Endothelial cell of umbilical vein (primary cell): ENCODE measurements at regions of chr7 and their contacts with region 1.

Region 1: GRCh38 chr7:123635551-123636359 is 19.9 kb upstream of the LMOD2 start:
- DNase-seq: peak; percentile 64
- H3K4me3 ChIP-seq: no peak overlapping the region
- H3K27ac ChIP-seq: peak overlapping the region; percentile 18
- H3K4me1 ChIP-seq: peaks cover 28% of the 10 kb centered on the region
- H3K27me3 ChIP-seq: no peaks in the 10 kb centered on the region
- CTCF ChIP-seq: peak; percentile 44 to 52
- POLR2A ChIP-seq: no peak

Region 2: DNA sequence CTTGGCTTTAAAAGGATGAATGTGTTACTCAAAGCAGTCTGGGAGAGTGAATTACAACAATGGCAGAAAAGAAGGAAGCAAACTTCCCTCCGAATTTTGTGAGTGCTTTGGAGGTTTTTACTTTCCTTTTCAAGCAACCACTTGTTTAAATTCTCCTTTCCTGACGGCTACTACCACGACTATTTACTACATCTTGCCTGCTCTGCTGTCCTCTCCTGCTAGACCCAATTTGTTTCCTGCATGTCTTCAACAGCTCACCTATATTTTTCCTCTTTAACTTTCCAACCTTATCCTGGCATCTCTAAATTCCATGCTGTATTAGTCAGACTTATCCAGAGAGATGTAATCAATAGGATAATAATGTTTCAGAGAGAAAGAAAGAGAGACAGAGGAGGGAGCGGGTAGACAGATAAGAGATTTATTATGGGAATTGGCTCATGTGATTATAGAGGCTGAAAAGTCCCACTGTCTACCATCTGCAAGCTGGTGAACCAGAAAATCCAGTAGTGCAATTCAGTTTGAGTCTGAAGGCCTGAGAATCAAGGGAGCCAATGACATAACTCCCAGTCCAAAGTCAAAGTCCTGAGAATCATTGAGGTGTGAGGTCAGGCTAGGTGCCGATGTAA is 393.2 kb before region 1 on chr7:
- CTCF ChIA-PET with region 1: no interaction called
- POLR2A ChIA-PET with region 1: no interaction called
- dilution Hi-C with region 1: no loop called
- intact Hi-C with region 1: no loop called
- DNase-seq: no peak
- H3K4me3 ChIP-seq: no peak overlapping the region
- H3K27ac ChIP-seq: no peak overlapping the region
- H3K4me1 ChIP-seq: no peaks in the 10 kb centered on the region
- H3K27me3 ChIP-seq: no peaks in the 10 kb centered on the region
- CTCF ChIP-seq: no peak
- POLR2A ChIP-seq: no peak

Region 3: GRCh38 chr7:123494193-123494796 is 141.5 kb before region 1 on chr7:
- CTCF ChIA-PET with region 1: interaction called, 17 read pairs
- POLR2A ChIA-PET with region 1: interaction called, 3 read pairs
- dilution Hi-C with region 1: no loop called
- intact Hi-C with region 1: loop called (anchors 1 kb)
- DNase-seq: peak; percentile 62
- H3K4me3 ChIP-seq: no peak overlapping the region
- H3K27ac ChIP-seq: no peak overlapping the region
- H3K4me1 ChIP-seq: no peaks in the 10 kb centered on the region
- H3K27me3 ChIP-seq: peaks cover 3 to 10% of the 10 kb centered on the region in 2 experiments
- CTCF ChIP-seq: peak; percentile 25 to 37
- POLR2A ChIP-seq: no peak

Region 4: GRCh38 chr7:123580406-123581161 is 55.2 kb before region 1 on chr7:
- CTCF ChIA-PET with region 1: interaction called, 26 read pairs
- POLR2A ChIA-PET with region 1: no interaction called
- dilution Hi-C with region 1: no loop called
- intact Hi-C with region 1: loop called (anchors 1 kb)
- DNase-seq: peak; percentile 61
- H3K4me3 ChIP-seq: no peak overlapping the region
- H3K27ac ChIP-seq: no peak overlapping the region
- H3K4me1 ChIP-seq: no peaks in the 10 kb centered on the region
- H3K27me3 ChIP-seq: no peaks in the 10 kb centered on the region
- CTCF ChIP-seq: peak; percentile 69 to 73
- POLR2A ChIP-seq: no peak

Region 5: GRCh38 chr7:123748734-123749536 is 113.2 kb after region 1 on chr7 and contains the start of gene WASL:
- CTCF ChIA-PET with region 1: interaction called, 10 read pairs
- POLR2A ChIA-PET with region 1: interaction called, 3 read pairs
- dilution Hi-C with region 1: no loop called
- intact Hi-C with region 1: loop called (anchors 1 kb)
- DNase-seq: peak; percentile 89
- H3K4me3 ChIP-seq: peak within 1 kb of the TSS; percentile 93 to 98 (median 98)
- H3K27ac ChIP-seq: peak within 1 kb of the TSS; percentile 71
- H3K4me1 ChIP-seq: peaks cover 46% of the 10 kb centered on the region
- H3K27me3 ChIP-seq: no peaks in the 10 kb centered on the region
- CTCF ChIP-seq: no peak
- POLR2A ChIP-seq: peak; percentile 87
- total RNA-seq, gene WASL: 22.1 and 24.0 TPM in 2 replicates

Region 6: DNA sequence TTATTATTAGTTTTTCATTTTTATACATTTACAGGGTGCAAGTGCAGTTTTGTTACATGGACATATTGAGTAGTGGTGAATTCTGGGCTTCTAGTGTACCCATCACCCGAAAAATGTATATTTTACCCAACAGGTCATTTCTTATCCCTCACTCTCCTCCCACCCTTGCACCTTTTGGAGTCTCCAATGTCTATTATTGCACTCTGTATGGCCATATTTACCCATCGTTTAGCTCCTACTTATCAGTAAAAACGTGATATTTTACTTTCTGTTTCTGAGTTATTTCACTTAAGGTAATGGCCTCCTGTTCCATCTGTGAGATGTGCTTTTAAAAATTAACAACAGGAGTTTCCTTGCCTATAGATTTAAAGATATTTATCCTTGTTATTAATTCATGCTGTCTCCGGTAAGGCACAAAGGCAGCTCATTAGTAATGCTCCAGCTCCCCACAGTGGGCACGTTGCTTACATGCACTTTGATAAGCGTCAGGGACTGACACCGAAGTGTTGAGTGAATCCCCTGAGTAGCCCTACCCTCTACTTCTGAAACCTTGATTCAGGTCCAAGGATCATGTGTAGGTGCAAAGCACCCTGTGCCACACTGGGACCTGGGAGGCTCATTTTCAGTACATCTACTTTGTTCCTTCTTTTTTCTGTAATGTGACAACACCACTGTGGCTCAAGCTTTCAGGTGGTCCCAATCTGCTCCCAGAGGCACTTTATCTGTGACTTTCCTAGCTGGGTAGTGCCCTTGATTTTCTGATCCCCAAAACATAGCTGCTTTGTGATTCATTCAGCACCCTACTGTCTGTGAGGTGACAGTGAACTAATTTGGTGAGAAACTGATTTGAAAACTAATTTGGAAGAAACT is 236.5 kb after region 1 on chr7:
- CTCF ChIA-PET with region 1: interaction called, 47 read pairs
- POLR2A ChIA-PET with region 1: no interaction called
- dilution Hi-C with region 1: no loop called
- intact Hi-C with region 1: loop called (anchors 1 kb)
- DNase-seq: peak; percentile 74
- H3K4me3 ChIP-seq: no peak overlapping the region
- H3K27ac ChIP-seq: no peak overlapping the region
- H3K4me1 ChIP-seq: no peaks in the 10 kb centered on the region
- H3K27me3 ChIP-seq: no peaks in the 10 kb centered on the region
- CTCF ChIP-seq: peak; percentile 53 to 67
- POLR2A ChIP-seq: no peak

Region 7: DNA sequence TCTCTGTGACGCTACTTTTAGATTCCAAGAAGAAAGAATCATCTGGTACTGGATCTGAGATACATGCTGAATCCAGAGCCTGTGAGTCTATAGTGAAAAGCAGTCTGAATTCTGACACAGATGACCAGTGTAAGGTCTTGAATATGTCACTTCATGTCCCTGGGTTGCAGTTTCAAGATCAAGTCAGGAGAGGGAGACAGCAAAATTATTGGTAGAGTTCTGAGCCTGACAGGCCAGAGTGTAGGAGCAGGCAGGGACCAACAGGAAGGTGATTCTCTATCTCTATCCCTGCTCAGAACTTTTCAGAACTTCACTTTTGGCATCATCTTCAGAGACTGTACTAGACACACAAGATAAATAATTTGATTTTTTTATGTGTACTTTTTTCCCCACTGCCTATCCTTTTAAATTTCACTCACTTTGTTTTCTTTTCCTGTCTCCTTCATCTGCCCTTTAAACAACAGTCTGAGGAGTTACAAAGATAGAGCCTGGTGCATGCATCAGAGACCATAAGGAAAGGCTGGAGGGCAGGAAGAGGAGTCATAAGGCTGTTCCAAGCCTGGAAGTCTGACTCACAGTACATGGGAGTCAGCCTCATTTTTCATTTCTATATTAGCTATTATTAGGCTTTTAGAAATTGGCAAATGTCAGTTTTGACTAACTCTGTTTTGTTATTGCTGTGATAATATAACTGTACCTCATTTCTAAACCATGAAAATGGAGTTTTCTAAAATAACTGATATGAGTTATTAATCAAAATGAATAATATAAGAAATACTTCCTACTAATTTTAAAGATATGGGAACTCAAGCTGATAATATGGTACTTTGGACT is 517.3 kb after region 1 on chr7:
- CTCF ChIA-PET with region 1: no interaction called
- POLR2A ChIA-PET with region 1: no interaction called
- dilution Hi-C with region 1: no loop called
- intact Hi-C with region 1: loop called (anchors 1 kb)
- DNase-seq: peak; percentile 87
- H3K4me3 ChIP-seq: no peak overlapping the region
- H3K27ac ChIP-seq: peak overlapping the region; percentile 63
- H3K4me1 ChIP-seq: peaks cover 21% of the 10 kb centered on the region
- H3K27me3 ChIP-seq: no peaks in the 10 kb centered on the region
- CTCF ChIP-seq: peak; percentile 22 to 31
- POLR2A ChIP-seq: no peak

Region 8: DNA sequence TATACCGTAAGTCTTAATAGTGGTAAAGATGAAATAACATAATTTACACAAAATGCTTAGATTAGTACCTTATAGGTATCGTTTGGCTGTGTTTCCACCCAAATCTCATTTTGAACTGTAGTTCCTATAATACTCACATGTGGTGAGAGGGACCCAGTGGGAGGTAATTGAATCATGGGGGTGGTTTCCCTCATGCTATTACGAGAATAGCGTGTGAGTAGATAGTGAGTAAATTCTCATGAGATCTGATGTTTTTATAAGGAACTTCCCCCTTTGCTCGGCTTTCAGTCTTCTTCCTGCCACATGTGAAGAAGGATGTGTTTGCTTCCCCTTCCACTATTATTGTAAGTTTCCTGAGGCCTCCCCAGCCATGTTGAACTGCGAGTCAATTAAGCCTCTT is 1720.1 kb after region 1 on chr7:
- CTCF ChIA-PET with region 1: no interaction called
- POLR2A ChIA-PET with region 1: no interaction called
- dilution Hi-C with region 1: no loop called
- intact Hi-C with region 1: loop called (anchors 10 kb)
- DNase-seq: peak; percentile 95
- H3K4me3 ChIP-seq: no peak overlapping the region
- H3K27ac ChIP-seq: peak overlapping the region; percentile 76
- H3K4me1 ChIP-seq: peaks cover 34% of the 10 kb centered on the region
- H3K27me3 ChIP-seq: no peaks in the 10 kb centered on the region
- CTCF ChIP-seq: no peak
- POLR2A ChIP-seq: no peak